Activated CD4-positive, alpha-beta memory T cell treated with anti-CD3 and anti-CD28 coated beads for 36 hours (primary cell): ENCODE measurements at regions of chr1 and their contacts with region 1.

Region 1: GRCh38 chr1:28736450-28737306 is at the start of gene YTHDF2:
- DNase-seq: peak; percentile 99
- H3K4me3 Mint-ChIP-seq: peak within 1 kb of the TSS; percentile 83
- H3K27ac Mint-ChIP-seq: peak within 1 kb of the TSS; percentile 85
- H3K4me1 Mint-ChIP-seq: peaks cover 38% of the 10 kb centered on the region
- H3K27me3 Mint-ChIP-seq: no peaks in the 10 kb centered on the region
- total RNA-seq, gene YTHDF2: 74.3 to 80.1 TPM

Region 2: GRCh38 chr1:28409090-28409489 is 327.6 kb before region 1 on chr1:
- CTCF ChIA-PET with region 1: no interaction called
- POLR2A ChIA-PET with region 1: no interaction called
- intact Hi-C with region 1: no loop called
- DNase-seq: no peak
- H3K4me3 Mint-ChIP-seq: no peak overlapping the region
- H3K27ac Mint-ChIP-seq: no peak overlapping the region
- H3K4me1 Mint-ChIP-seq: peaks cover 2% of the 10 kb centered on the region
- H3K27me3 Mint-ChIP-seq: no peaks in the 10 kb centered on the region

Region 3: GRCh38 chr1:28642847-28643635 is 93.6 kb before region 1 on chr1 and contains the start of gene TAF12:
- CTCF ChIA-PET with region 1: interaction called, 22 read pairs
- POLR2A ChIA-PET with region 1: interaction called, 33 read pairs
- intact Hi-C with region 1: loop called (anchors 1 kb)
- DNase-seq: peak; percentile 95
- H3K4me3 Mint-ChIP-seq: peak within 1 kb of the TSS; percentile 93
- H3K27ac Mint-ChIP-seq: peak within 1 kb of the TSS; percentile 96
- H3K4me1 Mint-ChIP-seq: peaks cover 45% of the 10 kb centered on the region
- H3K27me3 Mint-ChIP-seq: no peaks in the 10 kb centered on the region
- total RNA-seq, gene TAF12: 26.8 to 27.5 TPM

Region 4: DNA sequence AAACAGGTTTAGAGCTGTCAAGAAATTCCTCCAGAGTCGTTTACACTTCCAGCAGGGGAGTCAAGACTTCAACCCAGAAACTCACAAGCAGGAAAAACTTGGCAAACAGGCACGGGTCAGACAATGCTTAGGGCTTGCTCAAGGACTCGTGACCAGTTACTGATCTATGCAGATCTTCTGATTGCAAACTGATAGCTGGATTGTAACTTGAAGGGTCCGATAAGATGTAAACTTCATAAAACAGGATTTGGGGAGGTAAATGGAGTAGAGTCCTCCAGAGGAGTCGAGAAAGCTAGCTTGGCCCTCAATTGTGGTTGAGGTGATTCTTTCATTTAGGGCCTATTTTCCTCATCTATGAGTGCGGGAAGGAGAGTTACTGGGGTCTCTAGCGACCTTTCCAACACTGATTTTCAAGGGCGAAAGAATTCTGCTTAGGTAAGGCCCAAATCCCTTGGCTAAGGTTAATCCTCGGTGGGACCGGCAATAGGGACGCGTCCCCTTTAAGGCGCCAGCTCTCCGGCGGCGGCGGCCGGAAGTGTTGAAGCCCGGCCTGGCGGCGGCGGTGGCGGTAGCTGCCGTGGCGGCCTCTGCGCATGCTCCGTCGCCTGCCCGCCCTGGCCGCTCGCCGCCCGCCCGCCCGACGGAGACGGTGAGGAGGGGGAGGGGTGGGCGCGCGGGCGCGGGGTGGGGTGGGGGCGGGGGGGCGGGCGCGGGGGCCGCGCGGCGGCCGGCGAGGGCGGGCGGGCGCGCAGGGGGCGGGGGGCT is 68.3 kb before region 1 on chr1 and contains the start of gene GMEB1:
- CTCF ChIA-PET with region 1: interaction called, 12 read pairs
- POLR2A ChIA-PET with region 1: interaction called, 18 read pairs
- intact Hi-C with region 1: loop called (anchors 1 kb)
- DNase-seq: peak; percentile 91
- H3K4me3 Mint-ChIP-seq: peak within 1 kb of the TSS; percentile 95
- H3K27ac Mint-ChIP-seq: peak within 1 kb of the TSS; percentile 99
- H3K4me1 Mint-ChIP-seq: peaks cover 12% of the 10 kb centered on the region
- H3K27me3 Mint-ChIP-seq: no peaks in the 10 kb centered on the region
- total RNA-seq, gene GMEB1: 21.4 to 22.6 TPM

Region 5: GRCh38 chr1:28751315-28752060 is 14.8 kb after region 1 on chr1:
- CTCF ChIA-PET with region 1: interaction called, 13 read pairs
- POLR2A ChIA-PET with region 1: interaction called, 5 read pairs
- intact Hi-C with region 1: no loop called
- DNase-seq: no peak
- H3K4me3 Mint-ChIP-seq: no peak overlapping the region
- H3K27ac Mint-ChIP-seq: no peak overlapping the region
- H3K4me1 Mint-ChIP-seq: peaks cover 50% of the 10 kb centered on the region
- H3K27me3 Mint-ChIP-seq: no peaks in the 10 kb centered on the region

Region 6: GRCh38 chr1:28835237-28835650 is 98.6 kb after region 1 on chr1:
- CTCF ChIA-PET with region 1: no interaction called
- POLR2A ChIA-PET with region 1: no interaction called
- intact Hi-C with region 1: no loop called
- DNase-seq: no peak
- H3K4me3 Mint-ChIP-seq: no peak overlapping the region
- H3K27ac Mint-ChIP-seq: no peak overlapping the region
- H3K4me1 Mint-ChIP-seq: no peaks in the 10 kb centered on the region
- H3K27me3 Mint-ChIP-seq: peaks cover 3% of the 10 kb centered on the region

Region 7: GRCh38 chr1:29210278-29211085 is 473.8 kb after region 1 on chr1:
- CTCF ChIA-PET with region 1: no interaction called
- POLR2A ChIA-PET with region 1: no interaction called
- intact Hi-C with region 1: no loop called
- DNase-seq: no peak
- H3K4me3 Mint-ChIP-seq: no peak overlapping the region
- H3K27ac Mint-ChIP-seq: no peak overlapping the region
- H3K4me1 Mint-ChIP-seq: no peaks in the 10 kb centered on the region
- H3K27me3 Mint-ChIP-seq: no peaks in the 10 kb centered on the region